Astrocyte of the cerebellum (primary cell): ENCODE measurements at regions of chr1 and their contacts with region 1.

Region 1: DNA sequence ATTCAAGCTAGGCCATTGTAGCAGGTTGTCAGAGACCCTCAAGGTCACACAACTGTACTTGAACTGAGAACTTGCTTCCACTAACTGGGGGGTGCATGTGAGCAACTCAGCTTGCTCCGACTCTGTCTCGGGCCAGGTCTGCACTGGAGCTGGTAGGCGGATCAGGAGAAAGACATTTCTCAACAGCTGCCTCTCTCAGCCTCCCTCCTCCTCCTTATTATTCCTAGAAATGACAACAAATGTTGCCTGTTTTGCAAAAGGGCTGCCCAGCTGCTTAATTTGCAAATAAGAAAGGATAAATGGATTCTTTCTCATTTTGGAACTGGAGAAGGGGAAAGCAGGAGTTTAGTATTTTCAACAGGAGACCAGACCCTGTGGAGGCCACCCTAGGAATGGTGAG is 140.5 kb downstream of the RHOU start:
- DNase-seq: no peak
- H3K4me3 ChIP-seq: no peak overlapping the region
- CTCF ChIP-seq: no peak

Region 2: GRCh38 chr1:229043115-229043514 is 167.4 kb after region 1 on chr1:
- in situ Hi-C with region 1: loop called (anchors 5 kb)
- DNase-seq: no peak
- H3K4me3 ChIP-seq: no peak overlapping the region
- CTCF ChIP-seq: no peak